ENCODE measurements at regions of chr18 and their contacts with region 1.

Region 1: DNA sequence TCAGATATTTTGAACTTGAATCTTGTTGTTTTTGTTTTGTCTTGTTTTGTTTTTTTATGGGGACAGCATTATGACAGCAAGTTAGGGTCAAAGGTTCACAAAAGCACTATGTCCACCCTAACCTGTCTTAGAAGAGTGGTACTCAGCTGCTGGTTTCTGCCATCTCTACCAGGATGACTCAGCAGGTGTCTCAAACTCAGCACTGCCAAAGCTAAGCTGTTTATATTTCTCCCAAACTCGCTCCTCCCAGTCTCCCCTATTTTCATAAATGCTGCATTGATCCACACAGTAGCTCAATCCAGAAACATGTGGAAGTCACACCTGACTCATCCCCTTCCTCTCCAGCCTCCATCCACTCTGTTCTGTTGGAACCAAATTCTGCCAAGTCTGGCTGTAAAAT is 134.9 kb downstream of the ZBTB7C start:
- DNase-seq: no peak
- ATAC-seq: no peak
- H3K4me3 ChIP-seq: no peak overlapping the region
- H3K27ac ChIP-seq: no peak overlapping the region
- H3K4me1 ChIP-seq: no peaks in the 10 kb centered on the region
- H3K27me3 ChIP-seq: peaks cover 0 to 2% (median 0%) of the 10 kb centered on the region in 9 donors
- CTCF ChIP-seq: no peak
- POLR2A ChIP-seq: no peak

Region 2: GRCh38 chr18:48186061-48186798 is 88.1 kb before region 1 on chr18:
- intact Hi-C with region 1: no loop called
- DNase-seq: peak in 1 of 5 donors; percentile 60
- ATAC-seq: peak in 3 of 4 donors; percentile 20 to 73 (median 64)
- H3K4me3 ChIP-seq: no peak overlapping the region
- H3K27ac ChIP-seq: peak overlapping the region in 1 of 12 donors; percentile 28
- H3K4me1 ChIP-seq: peaks cover 0 to 13% (median 0%) of the 10 kb centered on the region in 12 donors
- H3K27me3 ChIP-seq: no peaks in the 10 kb centered on the region
- CTCF ChIP-seq: no peak
- POLR2A ChIP-seq: no peak

Region 3: DNA sequence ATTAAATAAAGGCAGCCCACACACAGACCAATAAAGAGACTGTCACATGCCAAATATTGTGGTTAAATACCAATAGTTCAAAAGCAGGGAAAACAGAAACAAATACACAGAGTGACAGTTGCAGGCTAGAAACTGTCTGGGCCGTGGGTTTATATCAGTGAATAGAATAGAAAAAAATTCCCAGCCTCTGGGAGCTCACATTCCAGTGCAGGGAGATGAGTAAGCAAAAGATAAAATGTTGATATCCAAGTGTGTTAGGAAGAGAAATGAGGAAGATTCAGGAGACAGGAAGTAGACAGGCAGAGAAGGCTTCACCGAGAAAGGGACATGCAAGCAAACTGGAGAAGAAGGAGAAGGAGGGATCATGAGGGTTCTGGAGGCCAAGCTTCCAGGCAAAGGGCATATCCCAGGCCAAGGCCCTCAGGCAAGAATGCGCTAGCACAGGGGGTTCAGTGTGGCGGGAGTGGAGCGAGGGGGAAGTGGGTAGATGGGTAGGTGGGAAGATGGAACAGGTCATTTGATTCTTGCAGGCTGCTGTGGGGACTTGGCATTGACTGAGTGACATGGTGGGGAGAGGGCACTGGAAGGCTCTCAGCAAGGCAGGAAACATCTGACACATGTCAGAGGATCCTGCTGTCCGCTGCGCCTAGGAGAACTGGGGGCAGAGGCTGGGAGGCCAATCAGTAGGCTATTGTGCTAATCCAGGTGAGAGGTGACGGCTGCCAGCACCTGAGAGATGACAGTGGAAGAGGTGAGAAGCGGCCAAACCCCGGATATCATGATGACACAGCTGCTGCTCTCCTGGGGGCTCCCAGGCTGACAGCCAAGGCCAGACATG is 45.7 kb after region 1 on chr18:
- intact Hi-C with region 1: loop called in 1 of 10 experiments (anchors 5 kb)
- DNase-seq: no peak
- ATAC-seq: no peak
- H3K4me3 ChIP-seq: no peak overlapping the region
- H3K27ac ChIP-seq: no peak overlapping the region
- H3K4me1 ChIP-seq: peaks cover 0 to 16% (median 0%) of the 10 kb centered on the region in 12 donors
- H3K27me3 ChIP-seq: no peaks in the 10 kb centered on the region
- CTCF ChIP-seq: no peak
- POLR2A ChIP-seq: no peak

Region 4: DNA sequence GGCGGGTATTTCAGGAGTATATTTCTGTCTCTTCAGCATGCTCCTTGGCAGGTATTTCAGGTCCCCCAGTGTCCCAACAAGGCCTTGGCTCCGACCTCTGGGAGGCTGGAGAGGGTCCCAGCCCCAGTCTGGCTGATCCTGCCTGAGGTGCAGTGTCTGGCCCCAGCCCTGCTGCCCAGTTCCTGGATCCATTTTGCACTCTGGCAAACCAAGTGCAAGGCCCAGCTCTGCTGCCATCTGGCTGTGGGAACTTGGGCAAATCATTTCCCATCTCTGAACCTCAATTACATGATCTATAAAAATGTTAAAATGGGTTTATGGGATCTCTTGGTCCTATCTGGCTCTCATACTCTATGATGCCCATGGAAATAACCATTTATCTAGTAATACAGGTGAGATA is 71.3 kb after region 1 on chr18:
- intact Hi-C with region 1: no loop called
- DNase-seq: no peak
- ATAC-seq: peak in 2 of 4 donors; percentile 38 to 51
- H3K4me3 ChIP-seq: no peak overlapping the region
- H3K27ac ChIP-seq: no peak overlapping the region
- H3K4me1 ChIP-seq: peaks cover 0 to 13% (median 5%) of the 10 kb centered on the region in 12 donors
- H3K27me3 ChIP-seq: no peaks in the 10 kb centered on the region
- CTCF ChIP-seq: peak in 8 of 12 donors; percentile 11 to 40 (median 26)
- POLR2A ChIP-seq: no peak

Measured in heart left ventricle (tissue), 16 donors.